Dendritic cell treated with granulocyte-macrophage colony-stimulating factor and Interleukin-4, amounts not matched to agents 40 ng/mL and 50 ng/mL, for 4 days (primary cell): ENCODE measurements at regions of chr17 and their contacts with region 1.

Region 1: GRCh38 chr17:60577147-60577915 is 22.7 kb upstream of the PPM1D start:
- H3K4me3 Mint-ChIP-seq: peak overlapping the region; percentile 44
- H3K27ac Mint-ChIP-seq: peak overlapping the region; percentile 85
- H3K4me1 Mint-ChIP-seq: peaks cover 43% of the 10 kb centered on the region
- H3K27me3 Mint-ChIP-seq: no peaks in the 10 kb centered on the region

Region 2: GRCh38 chr17:60525685-60526514 is 51.4 kb before region 1 on chr17 and contains the start of gene APPBP2:
- intact Hi-C with region 1: loop called (anchors 10 kb)
- H3K4me3 Mint-ChIP-seq: peak within 1 kb of the TSS; percentile 99
- H3K27ac Mint-ChIP-seq: peak within 1 kb of the TSS; percentile 98
- H3K4me1 Mint-ChIP-seq: peaks cover 17% of the 10 kb centered on the region
- H3K27me3 Mint-ChIP-seq: peaks cover under 1% of the 10 kb centered on the region

Region 3: GRCh38 chr17:60563746-60564145 is 13.6 kb before region 1 on chr17:
- intact Hi-C with region 1: no loop called
- H3K4me3 Mint-ChIP-seq: no peak overlapping the region
- H3K27ac Mint-ChIP-seq: no peak overlapping the region
- H3K4me1 Mint-ChIP-seq: no peaks in the 10 kb centered on the region
- H3K27me3 Mint-ChIP-seq: no peaks in the 10 kb centered on the region

Region 4: DNA sequence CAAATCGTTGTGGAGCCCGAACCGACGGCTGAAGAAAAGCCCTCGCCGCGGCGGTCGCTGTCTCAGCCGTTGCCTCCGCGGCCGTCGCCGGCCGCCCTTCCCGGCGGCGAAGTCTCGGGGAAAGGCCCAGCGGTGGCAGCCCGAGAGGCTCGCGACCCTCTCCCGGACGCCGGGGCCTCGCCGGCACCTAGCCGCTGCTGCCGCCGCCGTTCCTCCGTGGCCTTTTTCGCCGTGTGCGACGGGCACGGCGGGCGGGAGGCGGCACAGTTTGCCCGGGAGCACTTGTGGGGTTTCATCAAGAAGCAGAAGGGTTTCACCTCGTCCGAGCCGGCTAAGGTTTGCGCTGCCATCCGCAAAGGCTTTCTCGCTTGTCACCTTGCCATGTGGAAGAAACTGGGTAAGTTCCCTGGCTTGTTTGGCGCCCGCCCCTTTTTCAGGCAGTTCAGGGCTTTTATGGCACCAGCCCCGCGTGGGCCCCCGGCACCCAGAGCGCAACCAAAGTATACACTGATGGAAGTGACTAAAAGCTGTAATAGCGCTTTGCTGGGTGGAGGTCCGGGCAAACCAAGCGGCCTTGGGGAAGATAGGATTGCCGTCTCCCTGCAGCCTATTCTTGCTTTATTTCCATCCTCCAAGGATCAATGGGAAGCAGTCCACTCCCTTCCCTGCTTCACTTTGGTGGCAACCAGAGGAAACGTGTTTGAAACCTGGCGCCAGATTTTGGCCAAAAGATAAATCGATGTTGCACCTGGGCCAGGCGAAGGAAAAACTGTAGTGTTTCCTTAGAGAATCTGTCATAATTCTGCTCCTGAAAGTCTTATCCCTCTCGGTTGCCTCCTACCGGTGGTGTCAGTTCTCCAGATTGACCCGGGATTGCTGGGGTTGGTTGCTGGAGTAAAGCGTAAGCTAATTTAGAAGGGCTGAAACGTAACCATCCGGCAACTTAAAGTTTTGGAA is 23.4 kb after region 1 on chr17:
- intact Hi-C with region 1: loop called (anchors 1 kb)
- H3K4me3 Mint-ChIP-seq: peak overlapping the region; percentile 94
- H3K27ac Mint-ChIP-seq: peak overlapping the region; percentile 94
- H3K4me1 Mint-ChIP-seq: peaks cover 62% of the 10 kb centered on the region
- H3K27me3 Mint-ChIP-seq: peaks cover 1% of the 10 kb centered on the region

Region 5: GRCh38 chr17:60630352-60630751 is 53.0 kb after region 1 on chr17:
- intact Hi-C with region 1: loop called (anchors 10 kb)
- H3K4me3 Mint-ChIP-seq: no peak overlapping the region
- H3K27ac Mint-ChIP-seq: no peak overlapping the region
- H3K4me1 Mint-ChIP-seq: no peaks in the 10 kb centered on the region
- H3K27me3 Mint-ChIP-seq: no peaks in the 10 kb centered on the region

Region 6: GRCh38 chr17:60748204-60748603 is 170.9 kb after region 1 on chr17:
- intact Hi-C with region 1: no loop called
- H3K4me3 Mint-ChIP-seq: no peak overlapping the region
- H3K27ac Mint-ChIP-seq: no peak overlapping the region
- H3K4me1 Mint-ChIP-seq: peaks cover 7% of the 10 kb centered on the region
- H3K27me3 Mint-ChIP-seq: no peaks in the 10 kb centered on the region